ENCODE measurements at regions of chr10 and their contacts with region 1.

Region 1: DNA sequence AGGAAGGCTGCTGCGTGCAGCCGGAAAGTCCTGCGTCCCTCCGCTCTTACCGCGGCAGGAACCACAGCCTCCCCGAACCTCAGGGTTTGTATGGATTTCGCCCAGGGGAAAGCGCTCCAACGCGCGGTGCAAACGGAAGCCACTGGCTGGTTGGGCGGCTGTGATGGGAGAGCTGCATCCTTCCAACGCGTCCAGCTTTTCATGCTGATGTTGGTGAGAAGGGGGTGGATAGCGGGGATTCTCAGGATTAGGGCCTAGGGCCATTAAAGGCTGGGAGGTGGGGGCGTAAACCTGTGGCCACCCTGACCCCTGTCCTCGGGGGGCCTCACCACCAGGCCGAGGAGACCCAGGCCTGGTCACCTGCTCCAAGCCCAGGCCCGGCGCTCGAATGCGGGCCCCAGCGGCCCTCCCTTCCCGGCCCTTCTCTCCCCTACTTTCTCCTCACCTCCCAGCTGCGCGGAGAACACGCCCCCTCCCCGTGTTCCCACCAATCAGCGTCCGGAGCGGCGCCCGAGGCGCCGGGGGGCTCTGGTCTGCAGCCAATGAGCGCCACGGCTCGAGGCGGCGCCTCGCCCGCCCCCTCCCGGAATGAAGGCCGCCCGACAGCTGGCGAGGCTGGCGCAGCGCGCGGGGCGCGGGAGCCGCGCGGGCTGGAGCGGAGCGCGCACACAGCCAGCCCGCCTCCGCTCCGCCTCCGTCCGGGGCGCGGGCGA is 458 bp upstream of the NANOS1 start:
- DNase-seq: peak; percentile 95 to 97
- H3K4me3 ChIP-seq: peak overlapping the region; percentile 68
- H3K4me3 Mint-ChIP-seq: peak overlapping the region; percentile 65
- H3K27ac Mint-ChIP-seq: no peak overlapping the region
- H3K4me1 ChIP-seq: peaks cover 11% of the 10 kb centered on the region; the same call in 1 of the 2 replicates
- H3K4me1 Mint-ChIP-seq: peaks cover 9% of the 10 kb centered on the region
- H3K27me3 ChIP-seq: no peaks in the 10 kb centered on the region
- H3K27me3 Mint-ChIP-seq: no peaks in the 10 kb centered on the region
- CTCF ChIP-seq: peak in 1 of 2 experiments; percentile 18

Region 2: GRCh38 chr10:118754720-118755480 is 274.2 kb before region 1 on chr10 and contains the start of gene CACUL1:
- CTCF ChIA-PET with region 1: no interaction called
- POLR2A ChIA-PET with region 1: interaction called, 5 read pairs
- intact Hi-C with region 1: loop called (anchors 5 kb)
- DNase-seq: peak; percentile 100
- H3K4me3 ChIP-seq: peak within 1 kb of the TSS; percentile 98
- H3K4me3 Mint-ChIP-seq: peak within 1 kb of the TSS; percentile 97
- H3K27ac Mint-ChIP-seq: peak within 1 kb of the TSS; percentile 95
- H3K4me1 ChIP-seq: peaks cover 14% of the 10 kb centered on the region
- H3K4me1 Mint-ChIP-seq: peaks cover 18% of the 10 kb centered on the region
- H3K27me3 ChIP-seq: no peaks in the 10 kb centered on the region
- H3K27me3 Mint-ChIP-seq: no peaks in the 10 kb centered on the region
- CTCF ChIP-seq: no peak
- total RNA-seq, gene CACUL1: 39.2 and 42.7 TPM in 2 replicates

Region 3: DNA sequence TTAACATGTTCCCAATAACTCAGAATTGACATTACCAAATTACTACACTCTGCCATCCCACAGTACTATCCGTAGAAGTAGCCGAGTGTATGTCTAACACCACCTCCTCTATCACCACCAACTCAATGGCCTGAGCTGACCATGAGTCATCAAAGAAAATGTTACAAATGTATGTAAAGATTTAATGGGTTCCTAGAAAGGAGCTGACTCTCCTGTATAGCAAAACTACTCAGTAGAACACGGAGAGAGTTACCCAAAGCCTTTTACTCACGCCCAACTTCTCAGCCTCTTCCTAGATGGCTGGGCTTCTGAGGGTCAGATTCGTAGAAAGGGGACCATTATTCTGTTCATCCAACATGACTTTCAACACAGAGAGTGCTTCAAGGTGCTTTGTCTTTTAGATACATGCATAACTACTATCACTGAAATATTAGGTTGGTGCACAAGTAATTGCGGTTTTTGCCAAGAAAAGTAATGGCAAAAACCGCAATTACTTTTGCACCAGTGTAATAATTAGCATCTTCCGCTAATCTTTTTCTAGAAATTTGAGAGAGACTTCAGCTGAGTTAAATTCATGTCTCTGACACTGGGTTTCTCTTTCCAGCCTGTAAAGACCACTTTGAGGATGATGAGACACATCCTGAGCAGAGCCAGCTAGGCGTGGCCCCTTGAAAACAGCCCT is 23.6 kb before region 1 on chr10:
- CTCF ChIA-PET with region 1: no interaction called
- POLR2A ChIA-PET with region 1: no interaction called
- intact Hi-C with region 1: loop called (anchors 1 kb)
- DNase-seq: no peak
- H3K4me3 ChIP-seq: no peak overlapping the region
- H3K4me3 Mint-ChIP-seq: no peak overlapping the region
- H3K27ac Mint-ChIP-seq: no peak overlapping the region
- H3K4me1 ChIP-seq: peaks cover 11% of the 10 kb centered on the region
- H3K4me1 Mint-ChIP-seq: peaks cover 8% of the 10 kb centered on the region
- H3K27me3 ChIP-seq: no peaks in the 10 kb centered on the region
- H3K27me3 Mint-ChIP-seq: no peaks in the 10 kb centered on the region
- CTCF ChIP-seq: no peak

Region 4: GRCh38 chr10:119041326-119041725 is 12.3 kb after region 1 on chr10:
- CTCF ChIA-PET with region 1: no interaction called
- POLR2A ChIA-PET with region 1: no interaction called
- intact Hi-C with region 1: no loop called
- DNase-seq: no peak
- H3K4me3 ChIP-seq: no peak overlapping the region
- H3K4me3 Mint-ChIP-seq: no peak overlapping the region
- H3K27ac Mint-ChIP-seq: no peak overlapping the region
- H3K4me1 ChIP-seq: no peaks in the 10 kb centered on the region
- H3K4me1 Mint-ChIP-seq: peaks cover 7% of the 10 kb centered on the region
- H3K27me3 ChIP-seq: no peaks in the 10 kb centered on the region
- H3K27me3 Mint-ChIP-seq: no peaks in the 10 kb centered on the region
- CTCF ChIP-seq: no peak

Region 5: DNA sequence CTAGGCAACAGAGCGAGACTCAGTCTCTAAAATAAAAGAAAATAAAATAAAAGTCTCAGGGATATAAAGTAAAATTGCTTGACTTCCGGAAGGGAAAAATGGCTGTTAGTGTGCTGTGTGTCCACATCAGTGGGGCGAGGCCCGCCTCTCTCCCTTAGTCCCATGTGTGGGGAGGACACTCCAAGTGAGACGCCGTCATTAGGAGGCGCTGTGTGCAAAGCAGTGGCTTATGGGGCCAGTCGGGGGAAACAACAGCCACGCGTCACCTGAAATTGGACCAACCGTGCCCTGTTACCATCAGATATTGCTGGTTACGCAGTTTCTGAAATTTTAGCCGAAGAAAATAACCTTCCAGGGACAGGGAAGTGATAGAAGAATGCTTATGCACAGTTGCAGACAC is 120.7 kb after region 1 on chr10:
- CTCF ChIA-PET with region 1: no interaction called
- POLR2A ChIA-PET with region 1: no interaction called
- intact Hi-C with region 1: no loop called
- DNase-seq: peak in 1 of 2 experiments; percentile 39
- H3K4me3 ChIP-seq: no peak overlapping the region
- H3K4me3 Mint-ChIP-seq: no peak overlapping the region
- H3K27ac Mint-ChIP-seq: no peak overlapping the region
- H3K4me1 ChIP-seq: no peaks in the 10 kb centered on the region
- H3K4me1 Mint-ChIP-seq: no peaks in the 10 kb centered on the region
- H3K27me3 ChIP-seq: no peaks in the 10 kb centered on the region
- H3K27me3 Mint-ChIP-seq: no peaks in the 10 kb centered on the region
- CTCF ChIP-seq: no peak

Measured in Caco-2 (cell line).